ENCODE measurements at regions of chr1 and their contacts with region 1.

Region 1: GRCh38 chr1:6489799-6490180 is 1.7 kb downstream of the PLEKHG5 start:
- DNase-seq: no peak
- H3K4me3 ChIP-seq: peak overlapping the region; percentile 84
- CTCF ChIP-seq: peak; percentile 95

Region 2: GRCh38 chr1:6001992-6002576 is 487.7 kb before region 1 on chr1:
- CTCF ChIA-PET with region 1: no interaction called
- POLR2A ChIA-PET with region 1: no interaction called
- DNase-seq: no peak
- H3K4me3 ChIP-seq: no peak overlapping the region
- CTCF ChIP-seq: no peak

Region 3: DNA sequence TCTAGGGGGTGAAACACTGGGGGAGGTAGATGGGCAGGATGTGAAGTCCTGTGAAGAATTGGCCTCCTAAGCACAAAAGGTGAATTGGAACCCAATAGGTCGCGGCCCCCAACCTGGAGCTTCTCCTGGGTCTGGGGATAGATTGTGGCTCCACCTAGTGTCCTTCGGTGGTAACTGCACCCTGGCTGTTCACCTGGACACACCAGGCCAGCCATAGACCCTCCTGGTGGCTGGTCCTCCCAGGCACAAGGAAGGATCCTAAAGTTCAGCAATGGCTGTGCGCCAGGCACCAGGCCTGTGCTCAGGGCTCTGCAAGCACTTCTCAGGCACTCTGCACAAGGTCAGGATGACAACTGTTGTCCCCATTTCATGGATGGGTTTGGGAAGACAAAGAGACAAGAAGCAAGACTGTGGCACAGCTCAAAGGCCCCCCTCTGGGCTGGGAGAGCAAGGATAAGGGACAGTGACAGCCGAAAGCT is 51.7 kb before region 1 on chr1:
- CTCF ChIA-PET with region 1: interaction called, 13 read pairs
- POLR2A ChIA-PET with region 1: no interaction called
- DNase-seq: no peak
- H3K4me3 ChIP-seq: no peak overlapping the region
- CTCF ChIP-seq: peak; percentile 88

Region 4: DNA sequence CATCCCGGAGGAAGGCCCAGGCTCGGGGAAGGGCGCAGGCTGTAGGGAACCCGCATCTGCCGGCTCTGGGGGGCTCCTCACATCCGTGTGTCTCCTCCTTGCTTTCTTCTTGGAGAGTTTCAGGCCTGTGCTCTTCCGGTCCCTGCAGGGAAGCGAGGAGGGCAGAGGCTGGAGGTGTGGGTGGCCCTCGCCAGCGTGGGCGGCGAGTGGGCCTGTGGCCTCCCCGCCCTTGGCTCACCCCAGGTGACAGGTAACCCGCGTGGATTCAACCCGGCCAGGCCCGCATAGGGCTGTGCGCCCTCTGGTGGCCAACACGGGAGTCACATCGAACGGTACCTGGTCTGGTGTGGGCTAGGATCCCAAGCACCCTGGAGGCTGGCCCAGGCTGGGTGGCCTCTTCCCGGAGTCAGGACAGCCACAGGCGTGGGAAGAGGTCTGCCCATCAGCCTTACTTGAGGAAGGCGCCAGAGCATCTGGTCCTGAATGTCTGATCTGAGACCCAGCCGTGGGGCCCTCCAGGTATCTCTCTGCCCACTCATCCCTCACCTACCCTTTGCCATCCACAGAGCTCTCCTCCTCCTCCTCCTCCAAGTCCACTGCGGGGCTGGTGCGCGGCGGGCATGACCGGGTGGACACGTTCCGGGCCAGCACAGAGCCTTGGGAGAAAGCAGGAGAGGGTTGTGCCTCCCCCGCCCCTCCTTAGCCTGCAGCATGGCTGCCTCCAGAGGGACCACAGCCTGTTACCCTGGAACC is 14.2 kb before region 1 on chr1:
- CTCF ChIA-PET with region 1: interaction called, 236 read pairs
- POLR2A ChIA-PET with region 1: no interaction called
- DNase-seq: no peak
- H3K4me3 ChIP-seq: no peak overlapping the region
- CTCF ChIP-seq: peak; percentile 90

Region 5: DNA sequence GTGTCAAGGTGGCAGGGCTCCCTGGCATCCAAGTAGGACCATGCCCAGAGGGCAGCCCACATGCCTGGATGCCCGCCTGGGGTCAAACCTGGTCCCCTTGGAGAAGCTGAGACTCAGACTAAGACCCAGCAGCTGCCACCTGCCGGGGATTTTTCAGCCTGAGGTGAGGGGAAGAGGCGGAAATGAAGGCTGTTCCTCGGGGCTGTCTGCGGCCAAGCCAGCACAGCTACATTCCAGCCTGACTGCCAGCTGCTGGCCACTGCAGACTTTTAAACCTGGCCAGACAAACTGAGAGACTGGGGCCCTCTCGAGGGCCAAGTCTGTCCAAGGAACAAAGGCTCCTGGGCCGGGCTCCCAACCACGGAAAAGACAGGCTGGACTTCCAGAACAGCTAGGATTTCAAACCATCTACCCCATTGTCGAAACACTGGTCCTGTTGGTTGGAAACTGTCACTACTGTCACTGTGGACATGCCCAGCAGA is 23.6 kb after region 1 on chr1:
- CTCF ChIA-PET with region 1: interaction called, 10 read pairs
- POLR2A ChIA-PET with region 1: interaction called, 3 read pairs
- DNase-seq: no peak
- H3K4me3 ChIP-seq: no peak overlapping the region
- CTCF ChIP-seq: no peak

Region 6: DNA sequence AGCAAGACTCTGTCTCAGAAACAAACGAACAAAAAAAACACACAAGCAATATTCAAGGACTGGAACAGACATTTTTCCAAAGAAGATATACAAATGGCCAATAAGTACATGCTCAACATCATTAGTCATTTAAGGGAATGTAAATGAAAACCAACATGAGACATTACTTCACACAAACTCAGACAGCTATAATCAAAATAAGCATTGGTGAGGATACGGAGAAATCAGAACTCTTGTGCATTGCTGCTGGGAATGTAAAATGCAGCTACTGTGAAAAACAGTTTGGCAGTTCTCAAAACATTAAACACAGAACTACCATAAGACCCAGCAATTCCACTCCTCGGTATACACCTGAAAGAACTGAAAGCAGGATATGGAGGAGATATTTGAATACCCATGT is 49.2 kb after region 1 on chr1:
- CTCF ChIA-PET with region 1: interaction called, 28 read pairs
- POLR2A ChIA-PET with region 1: interaction called, 4 read pairs
- DNase-seq: peak; percentile 67
- H3K4me3 ChIP-seq: no peak overlapping the region
- CTCF ChIP-seq: no peak

Region 7: DNA sequence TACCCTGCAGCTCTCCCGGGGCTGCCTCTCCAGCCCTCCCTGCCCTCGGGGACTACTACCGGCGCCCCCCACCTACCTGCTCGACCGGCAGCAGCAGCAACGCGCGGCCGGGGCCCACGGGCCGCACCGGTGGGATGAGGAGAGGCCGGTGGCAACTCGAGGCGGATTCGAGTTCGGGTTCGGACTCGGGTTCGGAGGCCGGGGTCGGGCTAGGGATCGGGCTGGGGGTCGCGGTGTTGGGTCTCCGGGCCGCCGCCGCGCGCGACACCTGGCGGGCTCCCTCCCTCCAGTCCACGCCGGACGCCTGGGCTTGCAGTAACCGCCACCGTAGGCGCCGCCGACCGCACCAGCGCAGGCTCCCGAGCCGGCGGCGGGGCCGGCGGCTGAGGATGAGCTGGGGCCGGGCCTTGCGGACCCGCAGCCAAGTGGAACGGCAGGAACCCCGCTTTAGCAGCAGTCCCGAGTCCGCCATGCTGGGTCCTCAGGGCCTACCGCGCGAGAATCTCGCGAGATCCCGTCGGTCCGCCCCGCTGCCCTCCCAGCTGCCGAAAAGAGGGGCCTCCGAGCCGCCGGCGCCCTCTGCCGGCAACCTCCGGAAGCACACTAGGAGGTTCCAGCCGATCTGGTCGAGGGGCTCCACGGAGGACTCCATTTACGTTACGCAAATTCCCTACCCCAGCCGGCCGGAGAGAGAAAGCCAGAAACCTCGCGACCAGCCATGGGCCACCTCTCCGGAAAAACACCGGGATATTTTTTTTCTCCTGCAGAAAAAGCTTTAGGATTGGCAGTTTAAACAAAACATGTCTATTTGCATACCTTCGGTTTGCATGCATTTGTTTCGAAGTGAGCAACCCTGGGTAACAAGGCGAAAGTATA is 64.5 kb after region 1 on chr1 and contains the start of gene NOL9:
- CTCF ChIA-PET with region 1: interaction called, 138 read pairs
- POLR2A ChIA-PET with region 1: no interaction called
- DNase-seq: peak; percentile 31
- H3K4me3 ChIP-seq: peak within 1 kb of the TSS; percentile 89
- CTCF ChIP-seq: peak; percentile 96

Region 8: DNA sequence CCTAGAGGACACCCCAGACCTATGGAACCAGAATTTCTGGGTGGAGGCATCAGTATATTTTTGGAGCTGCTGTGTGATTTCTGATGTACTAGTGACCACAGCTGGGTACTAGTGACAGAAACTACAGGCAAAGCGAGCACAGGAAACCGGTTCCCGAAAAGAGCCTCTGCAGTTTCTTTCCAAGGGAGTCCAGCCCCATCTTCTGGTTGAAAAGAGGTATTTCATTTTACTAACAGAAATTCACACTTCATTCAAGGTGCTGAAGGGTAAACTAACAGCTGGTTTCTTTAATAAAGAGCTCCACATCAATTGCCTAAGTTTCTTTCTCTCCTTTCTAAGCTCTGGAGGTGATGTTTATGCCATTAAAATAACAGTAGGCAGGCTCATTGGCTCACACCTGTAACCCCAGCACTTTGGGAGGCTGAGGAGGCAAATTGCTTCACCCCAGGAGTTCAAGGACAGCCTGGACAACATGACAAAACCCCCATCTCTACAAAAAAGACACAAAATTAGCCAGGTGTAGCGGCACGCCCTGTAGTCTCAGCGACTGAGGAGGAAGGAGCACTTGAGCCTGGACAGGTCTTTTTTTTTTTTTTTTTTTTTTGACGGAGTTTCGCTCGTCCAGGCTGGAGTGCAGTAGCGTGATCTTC is 156.8 kb after region 1 on chr1:
- CTCF ChIA-PET with region 1: interaction called, 120 read pairs
- POLR2A ChIA-PET with region 1: no interaction called
- DNase-seq: peak; percentile 4
- H3K4me3 ChIP-seq: no peak overlapping the region
- CTCF ChIP-seq: peak; percentile 50

Region 9: GRCh38 chr1:6701437-6702153 is 211.8 kb after region 1 on chr1 and contains the start of gene DNAJC11:
- CTCF ChIA-PET with region 1: no interaction called
- POLR2A ChIA-PET with region 1: no interaction called
- DNase-seq: no peak
- H3K4me3 ChIP-seq: peak within 1 kb of the TSS; percentile 98
- CTCF ChIP-seq: peak; percentile 68